ENCODE measurements at regions of chr3 and their contacts with region 1.

Region 1: DNA sequence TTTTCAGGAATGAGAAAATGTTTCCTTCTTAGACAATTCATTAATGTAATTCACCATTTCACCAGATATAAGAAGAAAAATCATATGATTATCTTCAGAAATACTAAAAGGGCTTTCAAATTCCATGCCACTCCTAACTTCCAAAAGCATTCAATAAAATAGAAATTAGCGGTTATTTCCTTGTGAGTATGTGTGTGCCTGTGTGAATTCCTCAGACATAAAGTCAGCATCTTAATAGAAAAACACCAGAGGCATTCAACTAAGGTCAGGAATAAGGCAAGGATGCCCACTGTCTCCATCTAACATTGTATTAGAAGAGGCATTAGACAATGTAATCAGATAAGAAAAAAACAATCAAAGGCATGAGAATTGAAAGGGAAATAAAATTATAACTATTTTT is 88.4 kb downstream of the PLCH1 start:
- DNase-seq: no peak

Region 2: GRCh38 chr3:155587581-155587980 is 68.9 kb before region 1 on chr3:
- intact Hi-C with region 1: loop called in 1 of 2 experiments (anchors 2 kb)
- DNase-seq: no peak